AG04449 (cell line): ENCODE measurements at regions of chr2 and their contacts with region 1.

Region 1: DNA sequence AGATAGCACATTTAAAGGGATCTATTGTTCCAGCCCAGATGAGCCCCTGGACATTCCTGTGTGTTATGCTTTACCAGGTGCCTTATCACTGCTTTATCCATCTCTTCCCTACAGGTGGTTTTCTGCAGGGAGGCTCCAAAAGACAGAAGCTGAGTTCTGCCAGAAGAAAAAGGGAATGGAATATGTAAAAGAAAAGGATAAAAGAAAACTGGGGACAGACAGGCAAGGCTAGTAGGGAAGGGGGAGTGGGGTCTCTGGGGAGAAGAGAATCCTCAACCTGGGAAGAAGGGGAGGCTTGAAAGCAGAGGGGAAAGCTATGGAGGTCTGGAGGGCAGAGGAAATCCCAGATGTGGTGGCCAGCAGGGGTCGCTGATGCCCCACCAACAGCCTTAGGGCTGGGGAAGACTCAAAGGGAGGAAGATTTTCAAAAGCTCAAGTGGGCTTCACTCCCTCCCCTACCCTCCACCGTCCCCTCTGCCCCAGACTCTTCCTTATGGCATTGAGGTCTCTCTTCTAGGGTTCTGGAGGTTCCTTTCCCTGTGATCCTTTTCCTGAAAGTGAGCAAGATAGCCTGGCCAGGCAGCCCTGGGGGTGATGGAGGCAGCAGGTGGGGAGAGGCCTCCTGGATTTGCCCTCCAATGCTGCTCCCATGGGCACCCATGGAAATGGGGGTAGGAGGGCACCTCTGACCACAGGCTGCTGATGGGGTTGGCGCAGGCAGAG is 178.1 kb upstream of the PKDCC start:
- DNase-seq: no peak
- H3K4me3 ChIP-seq: no peak overlapping the region
- CTCF ChIP-seq: peak; percentile 87

Region 2: GRCh38 chr2:41840702-41841551 is 28.8 kb before region 1 on chr2:
- CTCF ChIA-PET with region 1: interaction called, 29 read pairs
- POLR2A ChIA-PET with region 1: no interaction called
- DNase-seq: peak; percentile 73
- H3K4me3 ChIP-seq: peak overlapping the region; percentile 78
- CTCF ChIP-seq: peak; percentile 98

Region 3: DNA sequence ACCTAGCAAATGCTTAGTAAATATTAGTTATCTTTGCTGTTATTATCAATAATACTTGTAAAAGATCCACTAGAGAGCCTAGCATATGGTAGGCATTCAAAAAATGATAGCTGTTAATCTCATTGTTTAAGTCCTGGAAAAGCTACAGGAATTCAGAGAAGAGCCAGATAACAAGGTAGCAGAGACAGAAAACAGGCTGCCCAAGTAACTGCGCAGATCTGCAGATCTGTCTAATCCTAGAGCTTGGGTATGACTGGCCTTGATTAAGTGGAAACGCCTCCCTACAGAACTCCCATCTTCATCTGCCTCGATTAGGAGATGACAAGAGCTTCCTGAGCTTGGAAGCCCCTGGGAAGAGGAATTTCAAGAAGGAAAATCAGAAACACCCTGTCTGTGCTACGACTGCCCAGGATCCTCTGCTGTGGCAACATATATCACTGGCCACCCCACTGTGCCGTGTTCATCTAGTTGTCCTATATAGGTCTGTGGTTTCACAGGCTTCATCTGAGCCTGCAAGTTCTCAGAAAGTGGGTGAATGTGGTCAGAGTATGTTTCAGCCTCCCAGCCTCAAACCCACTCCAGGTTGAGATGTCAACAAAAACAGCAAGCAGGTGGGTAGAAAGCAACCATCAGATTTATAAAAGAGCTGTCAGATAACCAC is 26.6 kb after region 1 on chr2:
- CTCF ChIA-PET with region 1: interaction called, 46 read pairs
- POLR2A ChIA-PET with region 1: no interaction called
- DNase-seq: no peak
- H3K4me3 ChIP-seq: no peak overlapping the region
- CTCF ChIP-seq: no peak

Region 4: DNA sequence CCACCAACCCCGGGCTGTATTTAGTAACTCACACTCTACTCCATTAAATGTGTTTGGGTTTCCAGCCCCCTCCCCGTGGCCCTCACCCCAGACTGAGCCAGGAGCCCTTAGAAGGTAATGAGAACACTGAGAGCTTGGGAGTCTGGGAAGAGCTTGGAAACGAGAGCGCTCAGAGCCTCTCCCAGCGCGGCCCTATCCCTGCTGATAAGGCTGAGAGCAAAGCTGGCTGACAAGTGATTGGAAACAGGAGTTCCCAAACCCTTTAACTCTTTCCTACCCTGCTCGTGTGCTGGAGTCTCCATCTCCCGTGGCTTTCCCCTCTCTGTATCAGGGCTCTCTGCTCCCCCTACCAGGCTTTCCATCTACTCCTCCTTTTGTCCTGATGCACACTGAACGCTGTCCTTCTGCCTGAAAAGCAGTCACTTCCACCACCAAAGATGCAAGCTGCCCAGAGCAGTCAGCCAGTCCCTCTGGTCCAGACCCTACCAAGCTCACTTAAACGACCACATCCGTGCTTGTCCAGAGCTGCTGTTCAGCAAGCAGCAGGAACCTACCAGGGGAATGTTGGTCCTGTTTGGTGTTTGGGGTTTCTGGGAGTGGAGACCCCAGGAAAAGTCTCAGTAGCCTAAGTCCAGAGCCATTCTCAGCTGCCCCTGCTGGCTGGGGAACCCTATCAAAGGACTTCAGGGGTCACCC is 78.1 kb after region 1 on chr2:
- CTCF ChIA-PET with region 1: interaction called, 10 read pairs
- POLR2A ChIA-PET with region 1: no interaction called
- DNase-seq: no peak
- H3K4me3 ChIP-seq: no peak overlapping the region
- CTCF ChIP-seq: no peak

Region 5: GRCh38 chr2:42047488-42048298 is 178.0 kb after region 1 on chr2 and contains the start of gene PKDCC:
- CTCF ChIA-PET with region 1: interaction called, 11 read pairs
- POLR2A ChIA-PET with region 1: no interaction called
- DNase-seq: no peak
- H3K4me3 ChIP-seq: peak within 1 kb of the TSS; percentile 76
- CTCF ChIP-seq: no peak

Region 6: DNA sequence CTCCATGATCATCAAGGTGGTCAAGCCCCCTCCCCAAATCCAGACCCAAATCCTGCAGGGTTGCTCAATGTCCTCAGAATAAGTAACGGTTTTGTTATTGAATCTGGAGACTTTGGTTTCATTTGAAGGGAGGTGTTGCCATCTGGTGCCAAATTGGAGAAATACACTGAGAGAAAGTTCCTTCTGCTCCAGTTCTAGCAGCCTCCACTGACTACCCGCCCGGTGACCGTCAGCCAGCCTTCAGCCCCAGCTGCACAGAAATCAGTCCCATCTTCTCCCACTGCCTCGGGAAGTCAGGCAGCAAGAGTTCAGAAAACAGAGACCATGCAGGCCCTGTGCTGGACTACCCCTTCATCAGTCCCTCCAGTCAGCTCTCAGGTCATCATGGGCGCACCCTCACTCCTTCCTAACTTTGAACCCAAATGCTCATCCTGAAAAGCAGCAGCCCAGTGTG is 216.8 kb after region 1 on chr2:
- CTCF ChIA-PET with region 1: interaction called, 1,155 read pairs
- POLR2A ChIA-PET with region 1: interaction called, 3 read pairs
- DNase-seq: no peak
- H3K4me3 ChIP-seq: no peak overlapping the region
- CTCF ChIP-seq: peak; percentile 57